Activated naive CD4-positive, alpha-beta T cell treated with anti-CD3 and anti-CD28 coated beads for 36 hours (primary cell): ENCODE measurements at regions of chr3 and their contacts with region 1.

Region 1: DNA sequence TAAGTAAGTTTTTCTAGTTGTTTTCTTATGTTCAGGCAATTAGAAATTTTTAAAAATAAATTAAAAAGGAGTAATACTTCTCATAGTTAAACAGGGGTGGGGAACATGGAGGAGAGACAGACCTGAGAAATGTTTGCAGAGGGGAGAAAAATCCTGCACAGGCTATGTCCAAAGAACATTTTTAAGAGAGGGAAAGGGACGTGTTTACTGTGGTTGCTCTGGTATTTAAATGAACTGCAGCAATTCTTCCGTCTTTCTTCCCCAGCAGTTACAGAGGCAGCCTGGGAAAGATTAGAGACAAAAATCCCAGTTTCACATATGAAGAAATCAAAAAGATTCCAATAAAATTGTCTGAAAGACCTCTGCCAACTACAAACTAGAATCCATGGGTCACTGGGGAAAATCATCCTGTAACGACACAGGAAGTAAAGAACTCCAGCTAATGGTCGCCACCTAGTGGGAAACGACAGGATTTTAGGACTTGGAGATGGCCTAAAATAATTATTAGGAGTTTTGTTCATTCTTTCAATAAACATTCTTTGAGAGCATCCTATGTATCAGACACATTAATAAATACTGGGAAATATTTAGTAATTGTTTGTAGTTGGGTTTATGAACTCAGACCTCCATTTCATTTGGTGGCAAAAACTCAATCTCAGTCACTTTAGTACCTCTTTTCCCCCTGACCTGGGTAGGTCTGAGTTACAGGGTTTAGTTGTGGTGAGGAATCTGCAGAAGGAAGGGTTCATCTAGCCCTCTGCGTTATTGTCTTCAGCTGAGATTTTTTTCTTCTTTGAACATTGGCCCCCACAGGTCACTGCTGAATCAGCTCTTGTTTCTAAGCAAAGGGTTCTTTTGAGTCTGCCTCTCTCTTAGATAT is 69.9 kb upstream of the GOLIM4 start:
- DNase-seq: peak; percentile 59
- H3K4me3 Mint-ChIP-seq: no peak overlapping the region
- H3K27ac Mint-ChIP-seq: no peak overlapping the region
- H3K4me1 Mint-ChIP-seq: no peaks in the 10 kb centered on the region
- H3K27me3 Mint-ChIP-seq: no peaks in the 10 kb centered on the region

Region 2: DNA sequence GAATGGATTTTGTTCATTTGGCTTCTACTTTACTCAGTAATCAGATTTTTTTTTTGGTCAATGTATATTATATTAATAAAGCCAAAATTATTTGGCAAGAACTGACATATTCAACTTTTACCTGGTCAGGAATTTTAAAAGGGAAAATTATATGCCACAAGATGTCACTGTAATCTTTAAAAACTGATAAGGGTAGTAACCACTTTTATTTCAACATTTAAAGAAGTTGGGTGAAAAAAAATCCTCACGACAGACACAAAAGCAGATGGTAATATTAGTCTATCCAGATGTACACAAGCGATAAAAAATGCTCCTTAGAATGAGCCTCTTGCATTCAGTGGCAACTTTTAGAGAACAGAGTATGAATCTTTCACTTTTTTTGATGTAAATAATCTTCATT is 328.2 kb before region 1 on chr3:
- CTCF ChIA-PET with region 1: no interaction called
- intact Hi-C with region 1: loop called (anchors 5 kb)
- DNase-seq: no peak
- H3K4me3 Mint-ChIP-seq: no peak overlapping the region
- H3K27ac Mint-ChIP-seq: no peak overlapping the region
- H3K4me1 Mint-ChIP-seq: peaks cover 7% of the 10 kb centered on the region
- H3K27me3 Mint-ChIP-seq: peaks cover 7% of the 10 kb centered on the region

Region 3: GRCh38 chr3:167929968-167930367 is 235.7 kb before region 1 on chr3:
- CTCF ChIA-PET with region 1: no interaction called
- intact Hi-C with region 1: loop called (anchors 2 kb)
- DNase-seq: no peak
- H3K4me3 Mint-ChIP-seq: no peak overlapping the region
- H3K27ac Mint-ChIP-seq: no peak overlapping the region
- H3K4me1 Mint-ChIP-seq: no peaks in the 10 kb centered on the region
- H3K27me3 Mint-ChIP-seq: peaks cover 3% of the 10 kb centered on the region

Region 4: DNA sequence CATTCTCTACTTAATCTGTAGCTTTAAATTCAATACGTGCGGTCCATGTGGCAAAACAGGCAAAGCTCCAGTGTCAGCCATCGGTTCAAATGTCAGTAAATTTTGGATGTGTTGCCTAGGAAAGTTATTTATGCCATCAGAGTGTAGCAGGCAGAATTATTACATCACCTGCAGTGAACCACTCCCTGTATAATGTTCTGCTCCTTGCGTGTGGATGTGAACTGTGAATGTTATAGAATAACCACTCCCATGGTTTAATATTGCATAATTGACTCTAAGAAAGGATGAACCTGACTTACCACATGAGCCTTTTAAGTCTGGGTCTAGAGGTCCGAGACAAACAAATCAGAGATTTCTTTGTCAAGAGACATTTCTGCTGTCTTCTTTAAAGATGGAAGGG is 215.4 kb before region 1 on chr3:
- CTCF ChIA-PET with region 1: no interaction called
- intact Hi-C with region 1: no loop called
- DNase-seq: no peak
- H3K4me3 Mint-ChIP-seq: no peak overlapping the region
- H3K27ac Mint-ChIP-seq: no peak overlapping the region
- H3K4me1 Mint-ChIP-seq: no peaks in the 10 kb centered on the region
- H3K27me3 Mint-ChIP-seq: no peaks in the 10 kb centered on the region

Region 5: DNA sequence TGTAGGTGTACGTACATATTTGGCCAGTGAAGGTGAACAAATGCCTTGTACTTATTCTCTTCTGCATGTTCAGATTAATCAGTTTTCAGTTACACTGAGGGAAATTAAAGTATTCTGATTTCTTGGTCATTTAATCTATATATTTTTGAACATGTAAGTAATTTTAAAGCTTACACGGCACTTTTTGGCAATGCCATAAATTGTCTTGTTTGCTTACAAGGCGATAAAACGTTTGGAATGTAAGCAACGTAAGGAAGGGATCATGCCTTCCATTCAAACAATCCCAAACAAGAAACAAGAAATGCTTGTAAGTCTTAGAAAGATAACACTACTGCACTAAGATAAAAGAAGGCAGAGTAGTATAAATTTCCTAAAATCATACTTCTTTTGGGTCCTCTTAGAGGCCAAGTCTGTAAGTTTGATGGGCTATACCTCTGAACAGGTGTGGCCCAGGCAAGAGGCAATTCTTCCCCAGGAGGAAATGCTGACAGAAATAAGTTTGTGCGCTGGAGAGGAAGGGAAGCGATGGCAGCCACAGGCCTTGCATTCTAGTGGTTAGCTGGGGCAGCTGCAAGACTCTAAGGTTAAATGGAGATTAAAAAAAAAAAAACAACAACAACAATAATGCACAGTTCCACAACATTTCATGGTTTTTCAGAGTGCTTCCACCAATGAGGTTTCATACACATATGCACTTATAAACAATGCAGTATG is 143.7 kb before region 1 on chr3:
- CTCF ChIA-PET with region 1: no interaction called
- intact Hi-C with region 1: no loop called
- DNase-seq: no peak
- H3K4me3 Mint-ChIP-seq: no peak overlapping the region
- H3K27ac Mint-ChIP-seq: no peak overlapping the region
- H3K4me1 Mint-ChIP-seq: peaks cover 9% of the 10 kb centered on the region
- H3K27me3 Mint-ChIP-seq: peaks cover 8% of the 10 kb centered on the region

Region 6: DNA sequence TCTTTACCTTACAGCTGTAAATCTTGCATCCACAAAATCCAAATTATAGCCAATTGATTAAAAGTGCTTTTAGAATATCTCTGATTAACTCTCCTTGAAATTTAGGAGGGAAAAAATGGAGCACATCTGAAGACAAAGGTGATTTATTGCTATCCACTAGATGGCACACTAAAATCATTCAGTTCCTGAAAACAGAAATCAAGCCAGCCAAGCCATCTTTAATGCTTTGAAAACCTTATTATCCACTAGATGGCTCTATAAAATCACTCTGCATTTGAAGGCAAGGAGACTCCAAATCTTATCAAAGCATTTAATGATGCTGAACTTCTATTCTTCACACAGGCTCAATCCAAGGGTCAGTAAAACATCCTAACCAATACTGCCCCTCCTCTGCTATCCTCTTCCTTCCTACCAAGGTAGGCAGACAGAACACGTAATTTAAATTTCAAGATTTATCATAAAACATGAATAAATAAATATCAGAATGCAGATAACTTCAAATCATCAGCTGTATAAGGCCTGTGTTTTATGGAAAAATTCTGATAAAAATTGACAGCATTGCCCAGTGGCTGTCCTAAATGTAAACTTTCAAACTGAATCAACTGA is 118.3 kb before region 1 on chr3:
- CTCF ChIA-PET with region 1: interaction called, 6 read pairs
- intact Hi-C with region 1: loop called (anchors 1 kb)
- DNase-seq: no peak
- H3K4me3 Mint-ChIP-seq: no peak overlapping the region
- H3K27ac Mint-ChIP-seq: no peak overlapping the region
- H3K4me1 Mint-ChIP-seq: no peaks in the 10 kb centered on the region
- H3K27me3 Mint-ChIP-seq: peaks cover 9% of the 10 kb centered on the region

Region 7: DNA sequence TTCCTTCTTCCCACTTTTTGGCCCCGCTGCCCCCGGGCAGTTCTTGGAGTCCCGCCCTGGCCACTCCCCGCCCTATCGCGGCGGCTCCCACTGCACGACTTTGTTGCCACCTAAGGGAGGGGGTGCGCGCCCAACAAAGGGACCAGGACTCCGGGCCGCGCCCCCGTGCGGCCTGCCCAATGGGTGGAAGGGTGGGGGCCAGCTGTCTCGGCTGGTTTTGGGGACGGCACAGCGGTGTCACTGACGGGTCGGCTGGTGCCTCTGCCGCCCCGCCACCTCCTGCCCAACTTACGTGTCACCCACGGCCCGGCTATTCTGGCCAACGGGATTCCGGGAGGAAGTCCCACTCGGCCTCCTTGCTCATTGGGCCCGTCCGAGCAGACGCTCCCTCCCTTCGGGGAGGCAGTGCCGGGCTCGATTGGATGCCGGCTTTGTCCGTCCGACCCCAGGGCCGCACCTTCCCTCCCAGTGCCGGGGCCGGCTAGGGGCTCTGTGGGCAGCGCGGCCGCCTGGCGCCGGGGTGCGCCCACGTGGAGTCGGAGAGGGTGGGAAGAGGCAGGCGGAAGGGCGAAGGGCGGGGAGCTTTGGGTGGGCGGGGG is 69.9 kb before region 1 on chr3 and contains the start of gene GOLIM4:
- CTCF ChIA-PET with region 1: interaction called, 3 read pairs
- intact Hi-C with region 1: loop called (anchors 5 kb)
- DNase-seq: peak; percentile 55
- H3K4me3 Mint-ChIP-seq: peak within 1 kb of the TSS; percentile 80
- H3K27ac Mint-ChIP-seq: no peak within 1 kb of the TSS
- H3K4me1 Mint-ChIP-seq: peaks cover 7% of the 10 kb centered on the region
- H3K27me3 Mint-ChIP-seq: peaks cover 48% of the 10 kb centered on the region
- total RNA-seq, gene GOLIM4: 0.67 to 0.98 TPM

Region 8: DNA sequence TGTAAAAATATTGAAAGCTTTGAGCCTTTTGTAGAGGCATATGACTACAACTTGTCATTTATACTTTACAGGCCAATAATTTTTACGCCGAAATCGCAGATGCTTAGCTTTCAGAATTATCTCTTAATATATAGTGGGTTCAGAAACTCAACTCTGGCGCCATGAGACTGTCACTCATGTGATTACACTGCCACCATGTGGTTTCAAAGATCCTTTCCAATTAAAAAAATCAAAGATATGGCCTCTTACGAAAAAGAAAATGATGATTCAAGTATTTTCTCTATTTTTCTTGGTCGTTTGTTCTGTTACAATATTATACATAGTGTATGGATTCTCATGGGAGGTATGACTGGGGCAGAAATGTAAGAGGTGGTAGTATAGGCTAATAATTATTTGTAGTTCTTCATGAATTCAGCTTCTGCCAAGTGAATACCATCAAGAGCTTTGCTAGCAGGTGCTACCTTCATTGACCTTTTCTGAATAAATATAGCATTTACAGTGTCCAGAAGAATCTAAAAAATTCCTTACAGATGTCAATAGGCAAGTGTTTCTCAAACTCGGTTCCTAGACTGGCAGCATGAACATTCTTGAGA is 681.8 kb after region 1 on chr3:
- CTCF ChIA-PET with region 1: interaction called, 3 read pairs
- intact Hi-C with region 1: loop called (anchors 1 kb)
- DNase-seq: no peak
- H3K4me3 Mint-ChIP-seq: no peak overlapping the region
- H3K27ac Mint-ChIP-seq: no peak overlapping the region
- H3K4me1 Mint-ChIP-seq: no peaks in the 10 kb centered on the region
- H3K27me3 Mint-ChIP-seq: peaks cover 3% of the 10 kb centered on the region